ENCODE measurements at regions of chr16 and their contacts with region 1.

Region 1: GRCh38 chr16:80540516-80541272 is at the start of gene DYNLRB2:
- DNase-seq: peak; percentile 84 to 97 (median 89)
- ATAC-seq: peak; percentile 89
- H3K4me3 ChIP-seq: peak within 1 kb of the TSS; percentile 69 to 78
- H3K4me3 Mint-ChIP-seq: peak within 1 kb of the TSS; percentile 95
- H3K27ac ChIP-seq: peak within 1 kb of the TSS; percentile 73 to 80
- H3K27ac Mint-ChIP-seq: peak within 1 kb of the TSS; percentile 95
- H3K4me1 ChIP-seq: peaks cover 9% of the 10 kb centered on the region
- H3K4me1 Mint-ChIP-seq: peaks cover 18% of the 10 kb centered on the region
- H3K27me3 ChIP-seq: no peaks in the 10 kb centered on the region
- H3K27me3 Mint-ChIP-seq: peaks cover 8% of the 10 kb centered on the region
- CTCF ChIP-seq: no peak
- total RNA-seq, gene DYNLRB2: not detected

Region 2: DNA sequence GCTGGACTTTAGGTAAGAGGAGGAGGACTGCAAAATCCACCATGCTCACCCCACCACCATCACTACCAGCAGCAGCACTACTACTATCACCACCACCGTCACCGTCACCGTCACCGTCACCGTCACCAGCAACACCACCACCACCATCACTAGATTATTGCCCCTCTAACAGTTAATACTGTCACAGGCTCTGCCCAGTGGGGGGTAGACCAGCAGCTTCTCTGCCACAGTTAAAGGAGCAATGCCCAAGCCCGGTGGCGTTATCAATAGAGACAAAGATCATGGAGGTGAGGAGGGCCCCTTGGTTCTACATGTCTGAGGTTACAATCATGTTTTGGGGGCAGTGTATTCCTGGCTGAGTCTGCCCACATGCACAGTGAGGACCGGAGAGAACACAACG is 184.3 kb before region 1 on chr16:
- CTCF ChIA-PET with region 1: no interaction called
- POLR2A ChIA-PET with region 1: no interaction called
- intact Hi-C with region 1: no loop called
- DNase-seq: no peak
- ATAC-seq: no peak
- H3K4me3 ChIP-seq: no peak overlapping the region
- H3K4me3 Mint-ChIP-seq: no peak overlapping the region
- H3K27ac ChIP-seq: no peak overlapping the region
- H3K27ac Mint-ChIP-seq: no peak overlapping the region
- H3K4me1 ChIP-seq: no peaks in the 10 kb centered on the region
- H3K4me1 Mint-ChIP-seq: no peaks in the 10 kb centered on the region
- H3K27me3 ChIP-seq: no peaks in the 10 kb centered on the region
- H3K27me3 Mint-ChIP-seq: peaks cover 6% of the 10 kb centered on the region
- CTCF ChIP-seq: no peak

Region 3: DNA sequence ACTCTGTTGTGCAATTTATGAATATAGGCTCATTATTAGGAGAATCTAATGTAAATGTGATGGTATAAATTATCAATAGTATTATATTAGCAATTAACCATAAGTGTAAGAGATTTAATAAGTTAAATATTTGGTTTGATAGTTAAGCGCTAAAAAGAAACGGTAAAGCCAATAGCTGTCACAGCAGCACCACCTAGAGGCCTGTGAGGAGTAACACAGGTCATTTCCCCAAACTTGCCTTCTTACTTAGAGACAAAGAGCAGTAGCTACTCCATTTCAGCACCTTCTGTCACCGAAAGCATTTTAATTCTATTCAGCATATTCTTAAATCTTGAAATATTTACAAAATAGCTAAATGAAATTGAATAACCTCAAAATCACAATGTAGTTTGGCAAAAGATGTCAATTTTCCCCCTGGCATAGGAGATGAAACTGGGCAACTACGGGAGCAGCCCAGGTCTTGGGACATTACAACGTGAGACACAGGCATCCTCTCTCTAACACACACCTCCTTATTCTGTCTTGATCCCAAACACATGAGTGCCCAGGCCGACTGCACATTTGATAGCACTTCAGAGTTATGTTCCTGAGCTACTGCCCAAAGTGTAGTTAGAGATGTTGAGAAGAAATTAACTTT is 14.2 kb before region 1 on chr16:
- CTCF ChIA-PET with region 1: interaction called, 22 read pairs
- POLR2A ChIA-PET with region 1: no interaction called
- intact Hi-C with region 1: no loop called
- DNase-seq: peak; percentile 10 to 79 (median 49)
- ATAC-seq: peak; percentile 82
- H3K4me3 ChIP-seq: no peak overlapping the region
- H3K4me3 Mint-ChIP-seq: no peak overlapping the region
- H3K27ac ChIP-seq: no peak overlapping the region
- H3K27ac Mint-ChIP-seq: no peak overlapping the region
- H3K4me1 ChIP-seq: peaks cover 4% of the 10 kb centered on the region
- H3K4me1 Mint-ChIP-seq: no peaks in the 10 kb centered on the region
- H3K27me3 ChIP-seq: no peaks in the 10 kb centered on the region
- H3K27me3 Mint-ChIP-seq: no peaks in the 10 kb centered on the region
- CTCF ChIP-seq: peak; percentile 86

Region 4: GRCh38 chr16:80580109-80580832 is 39.6 kb after region 1 on chr16:
- CTCF ChIA-PET with region 1: no interaction called
- POLR2A ChIA-PET with region 1: no interaction called
- intact Hi-C with region 1: loop called in 1 of 2 experiments (anchors 1 kb)
- DNase-seq: peak; percentile 28 to 89 (median 52)
- ATAC-seq: peak; percentile 84
- H3K4me3 ChIP-seq: no peak overlapping the region
- H3K4me3 Mint-ChIP-seq: peak overlapping the region; percentile 59
- H3K27ac ChIP-seq: peak overlapping the region; percentile 23 to 73
- H3K27ac Mint-ChIP-seq: peak overlapping the region; percentile 87
- H3K4me1 ChIP-seq: peaks cover 40% of the 10 kb centered on the region
- H3K4me1 Mint-ChIP-seq: peaks cover 24% of the 10 kb centered on the region
- H3K27me3 ChIP-seq: no peaks in the 10 kb centered on the region
- H3K27me3 Mint-ChIP-seq: no peaks in the 10 kb centered on the region
- CTCF ChIP-seq: no peak

Region 5: GRCh38 chr16:80804056-80804450 is 263.4 kb after region 1 on chr16:
- CTCF ChIA-PET with region 1: interaction called, 3 read pairs
- POLR2A ChIA-PET with region 1: no interaction called
- intact Hi-C with region 1: loop called (anchors 1 to 5 kb)
- DNase-seq: peak; percentile 22 to 75 (median 57)
- ATAC-seq: peak; percentile 64
- H3K4me3 ChIP-seq: peak overlapping the region in 1 of 2 experiments; percentile 56
- H3K4me3 Mint-ChIP-seq: peak overlapping the region; percentile 93
- H3K27ac ChIP-seq: no peak overlapping the region
- H3K27ac Mint-ChIP-seq: peak overlapping the region; percentile 77
- H3K4me1 ChIP-seq: no peaks in the 10 kb centered on the region
- H3K4me1 Mint-ChIP-seq: peaks cover 20% of the 10 kb centered on the region
- H3K27me3 ChIP-seq: no peaks in the 10 kb centered on the region
- H3K27me3 Mint-ChIP-seq: peaks cover 2% of the 10 kb centered on the region
- CTCF ChIP-seq: no peak

Region 6: GRCh38 chr16:81745704-81746558 is 1205.2 kb after region 1 on chr16:
- CTCF ChIA-PET with region 1: no interaction called
- POLR2A ChIA-PET with region 1: no interaction called
- intact Hi-C with region 1: loop called (anchors 5 kb)
- DNase-seq: peak; percentile 46 to 86 (median 77)
- ATAC-seq: peak; percentile 97
- H3K4me3 ChIP-seq: peak overlapping the region; percentile 48 to 60
- H3K4me3 Mint-ChIP-seq: peak overlapping the region; percentile 86
- H3K27ac ChIP-seq: peak overlapping the region; percentile 24 to 60
- H3K27ac Mint-ChIP-seq: peak overlapping the region; percentile 89
- H3K4me1 ChIP-seq: peaks cover 9% of the 10 kb centered on the region
- H3K4me1 Mint-ChIP-seq: peaks cover 11% of the 10 kb centered on the region
- H3K27me3 ChIP-seq: no peaks in the 10 kb centered on the region
- H3K27me3 Mint-ChIP-seq: no peaks in the 10 kb centered on the region
- CTCF ChIP-seq: no peak

Measured in CD8-positive, alpha-beta T cell (primary cell).